ENCODE measurements at regions of chr2 and their contacts with region 1.

Region 1: GRCh38 chr2:39436592-39437510 is at the start of gene MAP4K3:
- DNase-seq: peak; percentile 88
- ATAC-seq: peak; percentile 70
- H3K4me3 Mint-ChIP-seq: peak within 1 kb of the TSS; percentile 86
- H3K27ac Mint-ChIP-seq: peak within 1 kb of the TSS; percentile 80
- H3K4me1 Mint-ChIP-seq: peaks cover 65% of the 10 kb centered on the region
- H3K27me3 Mint-ChIP-seq: no peaks in the 10 kb centered on the region
- total RNA-seq, gene MAP4K3: 8.1 to 11.8 TPM

Region 2: GRCh38 chr2:39379643-39380524 is 57.0 kb before region 1 on chr2:
- CTCF ChIA-PET with region 1: interaction called, 9 read pairs
- POLR2A ChIA-PET with region 1: interaction called, 14 read pairs
- intact Hi-C with region 1: loop called (anchors 1 to 2 kb)
- DNase-seq: no peak
- ATAC-seq: peak; percentile 66
- H3K4me3 Mint-ChIP-seq: no peak overlapping the region
- H3K27ac Mint-ChIP-seq: no peak overlapping the region
- H3K4me1 Mint-ChIP-seq: peaks cover 24% of the 10 kb centered on the region
- H3K27me3 Mint-ChIP-seq: no peaks in the 10 kb centered on the region

Region 3: DNA sequence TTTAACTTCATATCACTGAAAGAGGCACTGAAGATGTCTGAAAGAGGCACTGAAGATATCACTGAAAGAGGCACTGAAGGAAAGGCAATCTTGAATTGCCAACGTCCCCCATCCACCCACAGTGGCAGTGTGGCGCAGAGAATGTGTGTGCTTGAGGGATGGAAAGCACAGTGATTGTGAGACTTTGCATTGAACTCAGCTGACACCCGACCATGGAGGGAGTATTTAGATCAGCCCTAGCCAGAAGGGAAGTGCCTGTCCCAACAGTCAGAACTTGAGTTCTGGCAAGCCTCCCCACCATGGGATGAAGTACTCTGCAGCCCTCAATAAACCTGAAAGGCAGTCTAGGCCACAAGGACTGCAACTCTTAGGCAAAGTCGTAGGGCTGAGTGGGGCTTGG is 33.5 kb before region 1 on chr2:
- CTCF ChIA-PET with region 1: no interaction called
- POLR2A ChIA-PET with region 1: no interaction called
- intact Hi-C with region 1: loop called in 1 of 2 experiments (anchors 5 kb)
- DNase-seq: peak; percentile 44
- ATAC-seq: peak; percentile 81
- H3K4me3 Mint-ChIP-seq: no peak overlapping the region
- H3K27ac Mint-ChIP-seq: peak overlapping the region; percentile 19
- H3K4me1 Mint-ChIP-seq: peaks cover 67% of the 10 kb centered on the region
- H3K27me3 Mint-ChIP-seq: no peaks in the 10 kb centered on the region

Region 4: GRCh38 chr2:39424951-39425350 is 11.9 kb before region 1 on chr2:
- CTCF ChIA-PET with region 1: interaction called, 3 read pairs
- POLR2A ChIA-PET with region 1: interaction called, 7 read pairs
- intact Hi-C with region 1: loop called in 1 of 2 experiments (anchors 1 kb)
- DNase-seq: peak; percentile 32
- ATAC-seq: no peak
- H3K4me3 Mint-ChIP-seq: no peak overlapping the region
- H3K27ac Mint-ChIP-seq: no peak overlapping the region
- H3K4me1 Mint-ChIP-seq: peaks cover 62% of the 10 kb centered on the region
- H3K27me3 Mint-ChIP-seq: no peaks in the 10 kb centered on the region

Region 5: DNA sequence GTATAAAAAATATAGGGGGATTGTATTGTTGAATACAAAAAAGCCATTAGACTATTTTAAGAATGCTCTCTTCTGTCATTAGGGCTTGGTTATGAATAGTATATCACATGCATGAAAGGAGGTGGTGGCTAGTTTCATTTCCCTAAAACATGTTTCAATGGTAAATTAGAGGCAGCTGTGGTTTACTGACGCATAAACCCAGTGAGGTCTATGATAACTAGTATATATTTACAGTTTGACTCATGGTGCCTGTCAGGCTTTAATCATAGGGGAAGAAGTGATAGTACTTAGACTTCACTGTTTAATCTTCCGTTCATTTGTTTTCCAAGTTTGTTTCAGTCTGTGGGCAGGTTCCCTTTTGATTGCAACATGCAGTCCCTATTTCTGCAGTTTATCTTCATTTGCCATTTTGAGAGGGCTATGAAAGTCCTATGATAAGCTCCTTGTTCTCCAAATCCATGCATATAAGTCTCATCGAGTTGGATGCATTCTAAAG is 55.3 kb after region 1 on chr2:
- CTCF ChIA-PET with region 1: no interaction called
- POLR2A ChIA-PET with region 1: no interaction called
- intact Hi-C with region 1: loop called (anchors 1 to 2 kb)
- DNase-seq: peak; percentile 63
- ATAC-seq: peak; percentile 95
- H3K4me3 Mint-ChIP-seq: no peak overlapping the region
- H3K27ac Mint-ChIP-seq: peak overlapping the region; percentile 53
- H3K4me1 Mint-ChIP-seq: peaks cover 44% of the 10 kb centered on the region
- H3K27me3 Mint-ChIP-seq: peaks cover 9% of the 10 kb centered on the region

Region 6: GRCh38 chr2:39778962-39779851 is 342.4 kb after region 1 on chr2 and contains the start of gene THUMPD2:
- CTCF ChIA-PET with region 1: no interaction called
- POLR2A ChIA-PET with region 1: no interaction called
- intact Hi-C with region 1: loop called (anchors 1 to 10 kb)
- DNase-seq: peak; percentile 84
- ATAC-seq: peak; percentile 77
- H3K4me3 Mint-ChIP-seq: peak within 1 kb of the TSS; percentile 87
- H3K27ac Mint-ChIP-seq: peak within 1 kb of the TSS; percentile 88
- H3K4me1 Mint-ChIP-seq: peaks cover 64% of the 10 kb centered on the region
- H3K27me3 Mint-ChIP-seq: no peaks in the 10 kb centered on the region
- total RNA-seq, gene THUMPD2: 15.2 to 18.4 TPM

Region 7: DNA sequence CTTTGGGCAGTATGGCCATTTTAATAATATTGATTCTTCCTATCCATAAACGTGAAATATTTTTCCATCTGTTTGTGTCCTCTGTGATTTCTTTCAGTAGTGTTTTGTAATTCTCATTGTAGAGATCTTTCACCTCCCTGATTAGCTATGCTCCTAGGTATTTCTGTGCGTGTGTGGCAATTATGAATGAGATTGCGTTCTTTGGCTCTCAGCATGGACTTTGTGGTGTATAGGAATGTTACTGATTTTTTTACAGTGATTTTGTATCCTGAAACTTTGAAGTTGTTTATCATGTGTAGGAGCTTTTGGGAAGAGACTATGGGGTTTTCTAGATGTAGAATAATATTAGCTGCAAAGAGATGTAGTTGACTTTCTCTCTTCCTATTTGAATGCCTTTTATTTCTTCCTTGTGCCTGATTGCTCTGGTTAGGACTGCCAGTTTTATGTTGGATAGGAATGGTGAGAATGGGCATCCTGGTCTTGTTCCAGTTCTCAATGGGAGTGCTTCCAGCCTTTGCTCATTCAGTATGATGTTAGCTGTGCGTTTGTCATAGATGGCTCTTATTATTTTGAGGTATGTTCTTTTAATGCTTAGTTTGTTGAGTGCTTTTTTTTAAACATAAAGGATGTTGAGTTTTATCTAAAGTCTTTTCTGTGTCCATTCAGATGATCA is 369.2 kb after region 1 on chr2:
- CTCF ChIA-PET with region 1: no interaction called
- POLR2A ChIA-PET with region 1: no interaction called
- intact Hi-C with region 1: no loop called
- DNase-seq: no peak
- ATAC-seq: no peak
- H3K4me3 Mint-ChIP-seq: no peak overlapping the region
- H3K27ac Mint-ChIP-seq: no peak overlapping the region
- H3K4me1 Mint-ChIP-seq: no peaks in the 10 kb centered on the region
- H3K27me3 Mint-ChIP-seq: no peaks in the 10 kb centered on the region

Measured in activated CD4-positive, alpha-beta T cell treated with anti-CD3 and anti-CD28 coated beads for 36 hours (primary cell).